GM12878 (cell line): ENCODE measurements at regions of chr17 and their contacts with region 1.

Region 1: DNA sequence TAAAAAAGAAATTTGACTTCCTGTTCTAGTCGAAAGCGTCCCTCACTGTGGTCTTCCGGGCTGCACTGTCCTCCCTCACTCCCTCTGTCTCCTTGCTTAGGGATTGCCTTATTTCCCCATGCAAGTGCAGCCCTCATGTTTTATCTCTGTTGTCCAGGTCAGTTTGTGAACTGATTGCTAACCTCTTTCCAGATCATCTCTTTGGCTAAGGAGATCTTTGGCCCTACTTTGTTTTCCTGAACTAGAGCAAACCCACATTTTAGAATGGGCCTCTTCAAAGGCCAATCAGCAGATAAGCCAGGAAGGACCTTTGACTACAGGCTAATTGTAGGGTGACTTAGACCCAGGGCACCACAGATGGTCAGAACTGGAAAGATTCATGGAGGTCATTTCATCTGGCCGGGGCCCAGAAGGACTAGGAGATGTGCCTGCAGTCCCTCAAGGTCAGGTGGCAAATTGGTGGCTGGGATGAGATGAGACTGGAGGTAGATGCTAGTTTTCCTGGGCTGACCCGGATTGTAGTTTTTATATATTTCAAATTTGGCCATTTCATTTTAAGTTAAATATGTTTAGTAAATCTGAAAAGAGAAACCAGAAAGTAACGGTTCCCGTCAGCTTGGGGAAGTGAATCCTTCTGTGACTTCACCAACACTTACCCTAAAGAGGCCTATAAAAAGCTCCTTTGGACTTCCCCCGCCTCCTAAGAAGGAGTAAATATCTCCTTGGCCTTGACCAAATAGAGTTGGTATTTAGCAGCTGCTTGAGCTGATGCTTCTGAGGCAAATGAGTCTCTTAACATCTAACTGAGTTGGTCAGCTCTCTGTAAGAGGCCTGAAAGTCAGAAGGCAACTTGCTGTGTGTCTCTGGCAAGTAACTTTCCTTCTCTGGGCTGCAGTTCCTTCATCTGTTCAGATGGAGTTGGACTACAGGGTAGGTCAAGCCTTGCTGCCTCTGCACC is 6.2 kb upstream of the SLC25A19 start:
- DNase-seq: peak; percentile 97
- ATAC-seq: peak; percentile 74
- H3K4me3 ChIP-seq: peak overlapping the region; percentile 59; the same call in 1 of the 2 replicates
- H3K27ac ChIP-seq: peak overlapping the region; percentile 97
- H3K4me1 ChIP-seq: peaks cover 68% of the 10 kb centered on the region
- H3K27me3 ChIP-seq: no peaks in the 10 kb centered on the region
- CTCF ChIP-seq: no peak
- EP300 ChIP-seq: peak; percentile 93 to 97
- POLR2A ChIP-seq: peak; percentile 79
- RAD21 ChIP-seq: peak; percentile 27; the same call in 1 of the 2 replicates

Region 2: DNA sequence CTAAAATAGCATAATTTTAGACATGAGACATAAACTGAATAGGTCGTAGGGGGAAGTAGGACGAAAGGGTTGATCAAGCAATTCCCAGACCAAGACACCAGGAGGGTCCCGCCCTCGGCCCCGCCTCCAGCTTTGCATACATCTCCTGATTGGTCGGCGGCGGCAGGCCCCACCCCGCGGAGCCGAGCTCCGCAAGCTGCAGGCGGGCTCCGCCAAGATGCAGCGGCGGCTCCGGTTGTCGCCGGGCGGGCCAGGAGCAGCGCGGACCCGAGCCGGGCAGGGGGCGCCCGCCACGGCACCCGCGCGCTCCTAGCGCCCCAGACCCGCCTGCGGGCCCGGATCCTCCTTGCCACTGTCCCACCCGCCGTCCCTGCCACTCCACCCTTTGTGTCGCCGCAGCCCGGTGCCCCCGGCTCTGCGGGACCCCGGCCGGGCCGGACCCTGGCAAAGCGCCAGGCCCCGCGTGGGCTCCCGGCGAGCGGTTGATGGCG is 308.0 kb before region 1 on chr17 and contains the start of gene CDR2L:
- CTCF ChIA-PET with region 1: no interaction called
- POLR2A ChIA-PET with region 1: no interaction called
- RAD21 ChIA-PET with region 1: no interaction called
- SMC1A ChIA-PET with region 1: no interaction called
- in situ Hi-C with region 1: no loop called
- intact Hi-C with region 1: no loop called
- DNase-seq: peak; percentile 48
- ATAC-seq: peak; percentile 99
- H3K4me3 ChIP-seq: peak within 1 kb of the TSS; percentile 54
- H3K27ac ChIP-seq: no peak within 1 kb of the TSS
- H3K4me1 ChIP-seq: peaks cover 3% of the 10 kb centered on the region; the same call in 1 of the 2 replicates
- H3K27me3 ChIP-seq: peaks cover 2 to 16% of the 10 kb centered on the region in 2 experiments
- CTCF ChIP-seq: no peak
- EP300 ChIP-seq: no peak
- POLR2A ChIP-seq: peak; percentile 39; the same call in 1 of the 2 replicates
- RAD21 ChIP-seq: no peak
- polyA plus RNA-seq, gene CDR2L: not detected

Region 3: GRCh38 chr17:75144816-75145512 is 150.5 kb before region 1 on chr17:
- CTCF ChIA-PET with region 1: no interaction called
- POLR2A ChIA-PET with region 1: no interaction called
- RAD21 ChIA-PET with region 1: no interaction called
- SMC1A ChIA-PET with region 1: no interaction called
- in situ Hi-C with region 1: no loop called
- intact Hi-C with region 1: no loop called
- DNase-seq: no peak
- ATAC-seq: no peak
- H3K4me3 ChIP-seq: no peak overlapping the region
- H3K27ac ChIP-seq: no peak overlapping the region
- H3K4me1 ChIP-seq: peaks cover 9% of the 10 kb centered on the region; the same call in 1 of the 2 replicates
- H3K27me3 ChIP-seq: no peaks in the 10 kb centered on the region
- CTCF ChIP-seq: no peak
- EP300 ChIP-seq: no peak
- POLR2A ChIP-seq: no peak
- RAD21 ChIP-seq: no peak

Region 4: DNA sequence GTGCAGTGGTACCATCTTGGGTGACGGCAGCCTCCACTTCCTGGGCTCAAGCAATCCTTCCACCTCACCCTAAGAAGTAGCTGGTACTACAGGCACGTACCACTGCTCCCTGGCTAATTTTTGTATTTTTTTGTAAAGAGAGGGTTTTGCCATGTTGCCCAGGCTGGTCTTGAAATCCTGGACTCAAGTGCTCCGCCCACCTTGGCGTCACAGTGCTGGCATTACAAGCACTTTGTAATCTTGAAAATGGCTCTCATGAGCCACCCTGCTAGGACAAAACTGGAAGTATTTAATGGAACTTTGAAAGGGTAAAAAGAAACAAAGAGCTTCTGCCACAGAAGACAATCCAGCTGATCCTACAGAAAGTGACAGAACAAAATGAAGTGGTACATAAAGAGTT is 122.0 kb before region 1 on chr17:
- CTCF ChIA-PET with region 1: no interaction called
- POLR2A ChIA-PET with region 1: no interaction called
- RAD21 ChIA-PET with region 1: no interaction called
- SMC1A ChIA-PET with region 1: no interaction called
- in situ Hi-C with region 1: no loop called
- intact Hi-C with region 1: no loop called
- DNase-seq: no peak
- ATAC-seq: no peak
- H3K4me3 ChIP-seq: no peak overlapping the region
- H3K27ac ChIP-seq: no peak overlapping the region
- H3K4me1 ChIP-seq: no peaks in the 10 kb centered on the region
- H3K27me3 ChIP-seq: no peaks in the 10 kb centered on the region
- CTCF ChIP-seq: no peak
- EP300 ChIP-seq: no peak
- POLR2A ChIP-seq: no peak
- RAD21 ChIP-seq: no peak

Region 5: DNA sequence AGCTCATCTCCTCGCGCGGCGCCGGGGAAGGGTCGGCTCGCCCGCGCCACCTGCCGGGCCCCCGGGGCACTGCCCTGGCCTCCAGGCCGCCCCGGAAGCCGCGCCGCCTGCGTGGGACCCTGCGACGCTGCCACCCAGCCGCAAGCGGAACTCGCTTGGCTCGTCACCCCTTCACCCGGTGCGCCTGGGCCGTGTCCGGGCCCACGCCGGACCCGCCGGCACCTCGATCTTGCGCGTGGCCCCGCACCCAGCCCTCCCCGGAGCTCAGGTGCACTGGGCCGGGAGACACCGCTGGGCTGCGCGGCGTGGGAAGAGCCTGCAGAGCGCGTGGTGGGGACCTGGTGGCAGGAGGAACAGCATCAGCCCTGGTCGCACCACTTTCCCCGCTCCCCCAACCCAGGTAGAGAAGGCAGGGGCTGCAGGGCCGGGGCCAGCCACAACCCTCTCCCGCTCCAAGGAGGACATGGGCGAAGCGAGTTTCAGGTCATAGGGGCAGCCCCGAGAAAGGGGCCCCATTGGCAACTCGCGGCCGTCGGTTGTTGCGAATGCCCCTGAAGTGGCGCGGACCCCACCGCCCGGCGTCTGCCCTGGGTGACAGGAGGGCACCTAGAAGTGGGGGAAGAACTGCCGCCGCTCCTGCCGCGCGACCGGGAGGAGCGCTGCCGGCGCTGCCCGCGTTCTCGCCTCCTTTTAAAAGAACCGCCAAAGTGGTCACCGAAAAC is 24.1 kb before region 1 on chr17:
- CTCF ChIA-PET with region 1: interaction called, 19 read pairs
- POLR2A ChIA-PET with region 1: interaction called, 9 read pairs
- RAD21 ChIA-PET with region 1: interaction called, 68 read pairs
- SMC1A ChIA-PET with region 1: interaction called, 24 read pairs
- in situ Hi-C with region 1: no loop called
- intact Hi-C with region 1: no loop called
- DNase-seq: no peak
- ATAC-seq: peak; percentile 82
- H3K4me3 ChIP-seq: peak overlapping the region; percentile 70
- H3K27ac ChIP-seq: peak overlapping the region; percentile 91
- H3K4me1 ChIP-seq: peaks cover 24% of the 10 kb centered on the region
- H3K27me3 ChIP-seq: no peaks in the 10 kb centered on the region
- CTCF ChIP-seq: peak; percentile 66 to 87 (median 79); a peak in 4 of 6 replicates
- EP300 ChIP-seq: no peak
- POLR2A ChIP-seq: peak; percentile 79
- RAD21 ChIP-seq: peak; percentile 40; the same call in 1 of the 2 replicates

Region 6: DNA sequence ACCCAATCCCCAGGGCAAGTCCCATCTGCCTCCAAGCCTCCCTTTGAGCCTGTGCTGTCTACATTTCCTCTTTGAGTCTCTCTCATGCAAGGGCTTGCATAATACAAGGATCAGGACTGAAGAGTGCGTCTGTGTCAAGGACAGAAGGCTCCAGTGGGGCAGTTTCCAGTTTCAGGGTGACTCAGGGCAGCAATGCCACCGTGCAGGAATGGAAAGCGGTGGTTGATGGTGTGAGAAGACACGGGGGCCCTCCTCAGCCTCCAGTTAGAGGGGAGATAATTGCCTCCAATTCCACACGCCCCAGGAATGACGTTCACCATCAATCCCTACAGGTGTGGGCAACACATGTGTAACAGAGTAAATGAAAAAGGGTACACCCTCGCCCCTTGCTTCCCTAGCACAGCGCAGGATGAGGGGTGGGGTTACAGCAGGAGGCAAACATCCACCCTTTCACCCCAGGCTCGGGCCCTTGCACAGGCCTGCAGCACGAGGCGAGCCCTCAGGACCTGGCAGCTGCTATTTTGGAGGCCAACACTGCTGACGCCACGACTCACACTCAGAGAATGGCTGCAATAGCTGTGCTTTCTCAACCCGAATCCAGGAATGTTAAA is 18.6 kb after region 1 on chr17:
- CTCF ChIA-PET with region 1: interaction called, 48 read pairs
- POLR2A ChIA-PET with region 1: interaction called, 255 read pairs
- RAD21 ChIA-PET with region 1: interaction called, 364 read pairs
- SMC1A ChIA-PET with region 1: interaction called, 243 read pairs
- in situ Hi-C with region 1: no loop called
- intact Hi-C with region 1: loop called (anchors 1 kb)
- DNase-seq: no peak
- ATAC-seq: peak; percentile 79
- H3K4me3 ChIP-seq: no peak overlapping the region
- H3K27ac ChIP-seq: peak overlapping the region; percentile 87
- H3K4me1 ChIP-seq: peaks cover 67% of the 10 kb centered on the region
- H3K27me3 ChIP-seq: no peaks in the 10 kb centered on the region
- CTCF ChIP-seq: no peak
- EP300 ChIP-seq: 0 out of 4 replicates have a peak, but pooled peaks of 1 of the 2 experiments have one; percentile 36
- POLR2A ChIP-seq: no peak
- RAD21 ChIP-seq: no peak

Region 7: GRCh38 chr17:75345514-75346167 is 50.2 kb after region 1 on chr17:
- CTCF ChIA-PET with region 1: interaction called, 9 read pairs
- POLR2A ChIA-PET with region 1: interaction called, 48 read pairs
- RAD21 ChIA-PET with region 1: interaction called, 75 read pairs
- SMC1A ChIA-PET with region 1: interaction called, 61 read pairs
- in situ Hi-C with region 1: no loop called
- intact Hi-C with region 1: no loop called
- DNase-seq: peak; percentile 91
- ATAC-seq: peak; percentile 79
- H3K4me3 ChIP-seq: peak overlapping the region; percentile 62
- H3K27ac ChIP-seq: peak overlapping the region; percentile 85
- H3K4me1 ChIP-seq: peaks cover 68% of the 10 kb centered on the region
- H3K27me3 ChIP-seq: no peaks in the 10 kb centered on the region
- CTCF ChIP-seq: no peak
- EP300 ChIP-seq: peak; percentile 34 to 65; a peak in 1 of 4 replicates
- POLR2A ChIP-seq: no peak
- RAD21 ChIP-seq: 0 out of 2 replicates have a peak, but pooled peaks have one; percentile 25

Region 8: DNA sequence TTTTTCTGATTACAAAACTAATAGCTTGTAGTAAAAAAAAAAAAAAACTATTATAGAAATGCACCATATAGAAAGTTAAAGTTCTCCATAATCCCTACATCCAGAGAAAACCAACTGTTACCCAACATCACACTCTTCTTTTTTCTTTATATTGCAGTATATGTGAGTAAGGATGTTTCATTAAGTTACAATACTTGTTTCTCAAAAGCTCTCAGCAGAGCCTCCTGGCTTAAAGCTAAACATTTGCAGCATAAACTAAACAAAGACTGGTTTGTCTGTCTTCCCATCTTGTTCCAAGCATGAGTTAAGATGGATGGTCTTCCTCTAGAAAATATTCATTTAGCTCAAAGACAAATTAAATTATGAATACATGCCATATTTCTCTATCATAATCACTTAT is 84.8 kb after region 1 on chr17:
- CTCF ChIA-PET with region 1: interaction called, 4 read pairs
- POLR2A ChIA-PET with region 1: interaction called, 6 read pairs
- RAD21 ChIA-PET with region 1: interaction called, 11 read pairs
- SMC1A ChIA-PET with region 1: interaction called, 22 read pairs
- in situ Hi-C with region 1: no loop called
- intact Hi-C with region 1: no loop called
- DNase-seq: no peak
- ATAC-seq: no peak
- H3K4me3 ChIP-seq: no peak overlapping the region
- H3K27ac ChIP-seq: no peak overlapping the region
- H3K4me1 ChIP-seq: peaks cover 6% of the 10 kb centered on the region; the same call in 1 of the 2 replicates
- H3K27me3 ChIP-seq: no peaks in the 10 kb centered on the region
- CTCF ChIP-seq: no peak
- EP300 ChIP-seq: no peak
- POLR2A ChIP-seq: no peak
- RAD21 ChIP-seq: no peak

Region 9: GRCh38 chr17:75400326-75400939 is 105.0 kb after region 1 on chr17:
- CTCF ChIA-PET with region 1: interaction called, 23 read pairs
- POLR2A ChIA-PET with region 1: interaction called, 30 read pairs
- RAD21 ChIA-PET with region 1: interaction called, 19 read pairs
- SMC1A ChIA-PET with region 1: interaction called, 16 read pairs
- in situ Hi-C with region 1: no loop called
- intact Hi-C with region 1: loop called (anchors 2 kb)
- DNase-seq: no peak
- ATAC-seq: no peak
- H3K4me3 ChIP-seq: peak overlapping the region; percentile 52
- H3K27ac ChIP-seq: no peak overlapping the region
- H3K4me1 ChIP-seq: peaks cover 24% of the 10 kb centered on the region; the same call in 1 of the 2 replicates
- H3K27me3 ChIP-seq: no peaks in the 10 kb centered on the region
- CTCF ChIP-seq: no peak
- EP300 ChIP-seq: no peak
- POLR2A ChIP-seq: no peak
- RAD21 ChIP-seq: no peak

Region 10: DNA sequence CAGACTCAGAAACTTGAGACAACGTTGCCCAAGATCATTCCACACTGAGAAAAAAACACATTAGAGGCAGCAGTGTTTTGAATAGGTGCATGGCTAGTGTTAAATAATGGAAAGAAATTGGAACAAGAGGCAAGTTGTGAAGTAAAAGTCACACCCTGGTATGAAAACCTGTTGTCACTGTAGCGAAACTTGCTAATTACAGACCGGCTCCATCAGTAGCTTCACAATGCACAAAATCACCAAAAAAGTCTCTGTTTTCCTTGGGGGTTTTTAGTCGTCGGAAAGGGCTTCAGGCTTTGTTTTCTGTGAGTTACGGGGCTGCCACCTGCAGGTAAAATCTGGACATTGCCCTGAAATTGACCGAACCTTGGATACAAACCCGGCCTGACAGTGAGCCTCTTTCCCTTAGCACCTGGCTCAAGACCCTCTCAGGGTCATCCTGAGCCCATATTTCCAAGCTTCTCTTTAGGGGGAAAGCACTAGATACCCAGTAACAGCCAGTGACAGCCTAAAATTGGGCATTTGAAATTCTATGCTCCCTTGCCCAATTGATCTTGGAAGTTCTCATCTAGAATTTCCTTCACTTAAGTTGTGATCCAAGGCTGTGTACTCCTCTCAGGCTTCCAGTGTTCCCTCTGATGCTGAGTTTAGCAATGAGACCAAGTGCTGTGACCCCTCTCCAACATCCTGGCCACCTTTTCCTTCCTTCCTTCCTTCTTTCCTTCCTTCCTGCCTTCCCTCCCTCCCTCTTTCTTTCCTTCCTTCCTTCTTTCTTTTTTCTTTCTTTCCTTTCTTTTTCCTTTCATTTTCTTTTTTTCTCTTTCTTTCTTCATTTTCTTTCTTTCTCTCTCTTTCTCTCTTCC is 117.2 kb after region 1 on chr17:
- CTCF ChIA-PET with region 1: interaction called, 65 read pairs
- POLR2A ChIA-PET with region 1: interaction called, 9 read pairs
- RAD21 ChIA-PET with region 1: interaction called, 41 read pairs
- SMC1A ChIA-PET with region 1: interaction called, 32 read pairs
- in situ Hi-C with region 1: no loop called
- intact Hi-C with region 1: no loop called
- DNase-seq: no peak
- ATAC-seq: peak; percentile 93
- H3K4me3 ChIP-seq: no peak overlapping the region
- H3K27ac ChIP-seq: peak overlapping the region; percentile 20
- H3K4me1 ChIP-seq: peaks cover 15% of the 10 kb centered on the region
- H3K27me3 ChIP-seq: no peaks in the 10 kb centered on the region
- CTCF ChIP-seq: peak; percentile 73 to 89 (median 85)
- EP300 ChIP-seq: no peak
- POLR2A ChIP-seq: no peak
- RAD21 ChIP-seq: peak; percentile 94